Activated CD4-positive, alpha-beta T cell treated with anti-CD3 and anti-CD28 coated beads, Interleukin-2, amount 10 ng/mL, durations not matched to agents 24 days and 14 days (primary cell): ENCODE measurements at regions of chr6 and their contacts with region 1.

Region 1: DNA sequence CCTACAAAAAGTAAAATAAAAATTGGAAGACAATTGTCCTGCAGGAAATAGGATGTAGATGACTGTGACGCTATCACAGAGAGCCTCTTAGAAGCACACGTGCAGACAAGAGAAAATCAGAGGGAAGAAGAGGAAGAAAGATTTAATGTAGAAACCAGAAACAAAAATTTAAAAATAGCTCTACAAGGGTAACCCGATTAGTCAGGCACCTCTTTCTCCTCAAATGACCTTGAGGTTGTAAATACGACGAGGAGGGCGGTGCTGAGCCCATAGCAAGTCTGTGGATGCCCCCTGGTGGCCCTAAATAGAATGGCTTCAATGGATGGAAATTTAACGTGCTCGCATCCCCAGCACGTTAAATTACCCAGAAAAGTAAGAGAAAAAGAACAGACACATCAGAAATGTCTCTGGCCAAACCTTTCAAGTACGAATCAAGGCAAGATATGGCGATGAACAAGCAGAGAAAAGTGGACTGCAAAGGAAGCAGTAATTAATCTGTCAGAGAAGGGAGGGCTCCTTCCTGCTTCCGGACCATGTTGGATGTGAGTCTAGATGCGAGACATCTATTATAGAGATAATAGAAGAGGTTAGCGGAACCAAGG is 4.2 kb upstream of the PRPH2 start:
- DNase-seq: peak; percentile 91
- H3K4me3 Mint-ChIP-seq: peak overlapping the region; percentile 84
- H3K27ac Mint-ChIP-seq: peak overlapping the region; percentile 97
- H3K4me1 Mint-ChIP-seq: peaks cover 14% of the 10 kb centered on the region
- H3K27me3 Mint-ChIP-seq: no peaks in the 10 kb centered on the region

Region 2: DNA sequence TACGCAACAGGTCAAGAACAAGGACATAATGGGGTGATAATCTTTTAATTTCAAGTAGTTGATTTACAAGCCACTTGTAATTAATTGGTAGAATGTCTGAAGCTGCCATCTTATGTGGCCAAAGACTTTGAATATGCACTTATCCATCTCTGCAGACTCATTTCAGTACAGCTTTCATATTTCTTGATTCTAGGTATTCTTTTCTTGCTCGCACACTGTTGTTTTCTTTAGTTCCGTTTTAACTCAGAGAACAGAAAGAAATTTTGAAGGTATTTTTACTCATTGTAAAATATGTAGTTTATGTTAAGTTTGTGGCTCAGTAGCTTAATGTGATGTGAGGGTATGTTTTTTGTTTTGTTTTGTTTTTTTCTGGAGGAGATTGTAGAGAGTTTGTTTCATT is 88.9 kb before region 1 on chr6:
- intact Hi-C with region 1: no loop called
- DNase-seq: no peak
- H3K4me3 Mint-ChIP-seq: no peak overlapping the region
- H3K27ac Mint-ChIP-seq: peak overlapping the region; percentile 7
- H3K4me1 Mint-ChIP-seq: peaks cover 12% of the 10 kb centered on the region
- H3K27me3 Mint-ChIP-seq: no peaks in the 10 kb centered on the region

Region 3: GRCh38 chr6:42661540-42662153 is 64.9 kb before region 1 on chr6:
- intact Hi-C with region 1: loop called (anchors 1 kb)
- DNase-seq: peak; percentile 94
- H3K4me3 Mint-ChIP-seq: no peak overlapping the region
- H3K27ac Mint-ChIP-seq: no peak overlapping the region
- H3K4me1 Mint-ChIP-seq: no peaks in the 10 kb centered on the region
- H3K27me3 Mint-ChIP-seq: no peaks in the 10 kb centered on the region

Region 4: GRCh38 chr6:42692137-42692911 is 34.3 kb before region 1 on chr6:
- intact Hi-C with region 1: loop called (anchors 2 kb)
- DNase-seq: no peak
- H3K4me3 Mint-ChIP-seq: no peak overlapping the region
- H3K27ac Mint-ChIP-seq: peak overlapping the region; percentile 29
- H3K4me1 Mint-ChIP-seq: peaks cover 32% of the 10 kb centered on the region
- H3K27me3 Mint-ChIP-seq: no peaks in the 10 kb centered on the region

Region 5: GRCh38 chr6:42890311-42891198 is 164.0 kb after region 1 on chr6:
- intact Hi-C with region 1: loop called (anchors 5 kb)
- DNase-seq: peak; percentile 97
- H3K4me3 Mint-ChIP-seq: peak overlapping the region; percentile 96
- H3K27ac Mint-ChIP-seq: peak overlapping the region; percentile 98
- H3K4me1 Mint-ChIP-seq: peaks cover 21% of the 10 kb centered on the region
- H3K27me3 Mint-ChIP-seq: no peaks in the 10 kb centered on the region